ENCODE measurements at regions of chr22 and their contacts with region 1.

Region 1: DNA sequence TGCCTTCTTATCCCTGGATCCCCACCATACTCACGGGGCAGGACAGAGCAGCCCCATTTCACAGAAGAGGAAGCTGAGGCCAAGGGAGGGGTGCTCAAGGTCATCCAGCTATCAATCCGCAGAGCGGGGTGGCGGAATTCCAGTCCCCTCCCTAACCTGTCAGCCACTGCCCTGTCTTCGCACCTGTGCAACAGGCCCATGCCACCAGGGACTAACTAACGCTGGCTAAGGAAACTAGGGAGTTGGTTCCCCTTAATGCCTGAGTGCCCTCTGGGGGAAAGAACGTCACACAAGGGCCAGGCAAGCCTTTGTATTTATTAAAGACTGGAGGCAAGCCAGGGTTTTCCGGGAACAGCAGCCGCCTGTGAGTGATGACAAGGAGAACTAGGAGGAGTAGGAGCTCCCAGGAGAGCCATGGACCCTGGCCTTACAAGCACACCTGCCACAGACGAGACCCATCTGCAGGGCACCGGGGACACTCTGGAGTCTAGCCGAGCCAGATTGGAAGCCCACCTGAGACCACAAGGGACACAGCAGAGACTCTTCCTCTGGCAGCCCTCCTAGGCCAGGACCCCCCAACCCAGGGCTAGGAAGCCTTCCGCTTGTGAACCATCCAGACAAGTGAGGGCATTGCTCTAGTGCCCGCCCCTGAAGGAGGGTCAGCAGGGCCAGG is 64.4 kb downstream of the MYH9 start:
- DNase-seq: no peak
- ATAC-seq: no peak
- H3K4me3 Mint-ChIP-seq: no peak overlapping the region
- H3K27ac Mint-ChIP-seq: peak overlapping the region; percentile 67
- H3K4me1 Mint-ChIP-seq: peaks cover 20% of the 10 kb centered on the region
- H3K27me3 Mint-ChIP-seq: no peaks in the 10 kb centered on the region
- CTCF ChIP-seq: no peak

Region 2: GRCh38 chr22:36162127-36163034 is 160.9 kb before region 1 on chr22:
- CTCF ChIA-PET with region 1: no interaction called
- POLR2A ChIA-PET with region 1: no interaction called
- intact Hi-C with region 1: no loop called
- DNase-seq: peak; percentile 83
- ATAC-seq: peak; percentile 61
- H3K4me3 Mint-ChIP-seq: peak overlapping the region; percentile 89
- H3K27ac Mint-ChIP-seq: peak overlapping the region; percentile 99
- H3K4me1 Mint-ChIP-seq: peaks cover 89% of the 10 kb centered on the region
- H3K27me3 Mint-ChIP-seq: no peaks in the 10 kb centered on the region
- CTCF ChIP-seq: no peak

Region 3: GRCh38 chr22:36311386-36312358 is 11.6 kb before region 1 on chr22:
- CTCF ChIA-PET with region 1: interaction called, 3 read pairs
- POLR2A ChIA-PET with region 1: interaction called, 14 read pairs
- intact Hi-C with region 1: no loop called
- DNase-seq: no peak
- ATAC-seq: no peak
- H3K4me3 Mint-ChIP-seq: no peak overlapping the region
- H3K27ac Mint-ChIP-seq: peak overlapping the region; percentile 30
- H3K4me1 Mint-ChIP-seq: peaks cover 6% of the 10 kb centered on the region
- H3K27me3 Mint-ChIP-seq: no peaks in the 10 kb centered on the region
- CTCF ChIP-seq: no peak

Region 4: GRCh38 chr22:36409911-36410756 is 86.8 kb after region 1 on chr22:
- CTCF ChIA-PET with region 1: no interaction called
- POLR2A ChIA-PET with region 1: no interaction called
- intact Hi-C with region 1: no loop called
- DNase-seq: peak; percentile 81
- ATAC-seq: peak; percentile 43
- H3K4me3 Mint-ChIP-seq: peak overlapping the region; percentile 74
- H3K27ac Mint-ChIP-seq: peak overlapping the region; percentile 66
- H3K4me1 Mint-ChIP-seq: peaks cover 38% of the 10 kb centered on the region
- H3K27me3 Mint-ChIP-seq: no peaks in the 10 kb centered on the region
- CTCF ChIP-seq: no peak

Region 5: DNA sequence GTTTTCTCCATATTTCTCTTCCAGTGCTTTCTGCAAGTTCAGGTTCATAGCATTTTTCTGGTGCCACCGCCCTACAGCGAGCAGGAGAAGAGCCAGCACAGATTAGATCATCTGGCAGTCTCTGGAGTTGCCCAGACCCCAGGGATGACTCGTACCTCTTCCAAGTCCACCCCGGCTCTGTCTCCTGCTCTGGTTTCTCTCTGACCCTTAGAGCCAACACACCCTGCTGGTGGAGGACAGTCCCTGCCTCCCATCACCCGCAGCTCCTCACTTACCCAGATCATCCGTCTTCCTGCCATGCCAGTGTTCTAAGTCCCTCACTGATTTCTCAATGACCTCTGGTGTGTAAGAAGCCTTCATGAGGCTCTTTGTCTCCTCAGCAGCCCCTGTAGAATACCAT is 667.9 kb after region 1 on chr22:
- CTCF ChIA-PET with region 1: no interaction called
- POLR2A ChIA-PET with region 1: no interaction called
- intact Hi-C with region 1: no loop called
- DNase-seq: no peak
- ATAC-seq: no peak
- H3K4me3 Mint-ChIP-seq: no peak overlapping the region
- H3K27ac Mint-ChIP-seq: no peak overlapping the region
- H3K4me1 Mint-ChIP-seq: no peaks in the 10 kb centered on the region
- H3K27me3 Mint-ChIP-seq: peaks cover 22% of the 10 kb centered on the region
- CTCF ChIP-seq: no peak